Activated B cell treated with CpG ODN at 0.5 μM for 24 hours (primary cell): ENCODE measurements at regions of chr19 and their contacts with region 1.

Region 1: GRCh38 chr19:38559428-38560401 is 58.0 kb downstream of the MAP4K1 start:
- DNase-seq: no peak
- ATAC-seq: peak; percentile 82
- H3K4me3 Mint-ChIP-seq: peak overlapping the region; percentile 75
- H3K27ac Mint-ChIP-seq: peak overlapping the region; percentile 90
- H3K4me1 Mint-ChIP-seq: peaks cover 57% of the 10 kb centered on the region
- H3K27me3 Mint-ChIP-seq: peaks cover 6% of the 10 kb centered on the region
- CTCF ChIP-seq: no peak

Region 2: DNA sequence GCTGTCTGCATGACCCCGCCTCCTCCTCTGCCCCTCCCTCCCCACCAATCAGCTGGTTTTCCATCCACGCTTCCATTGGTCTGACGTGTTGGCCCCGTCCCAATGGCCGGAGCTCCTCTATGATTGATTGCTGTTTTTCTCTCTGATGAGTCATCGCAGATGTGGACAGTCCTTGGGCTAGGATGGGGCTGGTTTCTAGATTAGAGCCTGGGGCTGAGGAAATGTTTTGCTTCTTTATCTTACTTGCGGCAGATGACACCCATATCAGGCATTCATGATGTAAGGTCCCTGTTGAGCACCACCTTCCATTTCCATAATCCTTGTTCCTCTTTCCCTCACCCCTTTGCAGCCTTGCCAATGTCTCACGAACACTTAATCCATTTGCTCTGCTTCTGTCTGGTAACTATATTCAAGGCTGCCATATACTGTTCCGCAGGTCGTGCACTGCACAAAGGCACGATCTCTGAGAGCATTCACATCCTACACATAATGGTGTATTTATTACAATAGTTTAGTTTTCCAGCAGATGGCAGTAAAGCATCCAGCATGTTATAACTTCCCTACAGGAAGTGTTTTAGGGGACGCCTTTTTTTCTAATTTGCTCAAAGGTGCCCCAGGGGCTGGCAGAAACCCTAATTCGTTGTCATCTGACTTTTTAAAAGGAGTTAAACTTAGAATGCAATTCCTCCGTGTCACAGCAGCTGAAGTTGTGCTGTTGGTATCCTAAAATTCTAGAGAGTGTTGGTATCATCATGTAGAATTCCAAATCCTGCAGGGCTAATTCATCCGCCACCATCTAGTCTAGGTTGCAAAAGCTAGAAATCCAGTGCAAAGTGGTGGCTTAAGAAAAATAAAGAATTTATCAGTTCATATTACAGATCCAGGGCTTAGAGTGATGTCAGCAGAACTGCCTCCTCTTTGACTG is 15.4 kb before region 1 on chr19:
- CTCF ChIA-PET with region 1: interaction called, 3 read pairs
- POLR2A ChIA-PET with region 1: interaction called, 17 read pairs
- intact Hi-C with region 1: loop called (anchors 1 kb)
- DNase-seq: no peak
- ATAC-seq: peak; percentile 65
- H3K4me3 Mint-ChIP-seq: peak overlapping the region; percentile 11
- H3K27ac Mint-ChIP-seq: peak overlapping the region; percentile 30
- H3K4me1 Mint-ChIP-seq: peaks cover 33% of the 10 kb centered on the region
- H3K27me3 Mint-ChIP-seq: no peaks in the 10 kb centered on the region
- CTCF ChIP-seq: peak; percentile 41

Region 3: DNA sequence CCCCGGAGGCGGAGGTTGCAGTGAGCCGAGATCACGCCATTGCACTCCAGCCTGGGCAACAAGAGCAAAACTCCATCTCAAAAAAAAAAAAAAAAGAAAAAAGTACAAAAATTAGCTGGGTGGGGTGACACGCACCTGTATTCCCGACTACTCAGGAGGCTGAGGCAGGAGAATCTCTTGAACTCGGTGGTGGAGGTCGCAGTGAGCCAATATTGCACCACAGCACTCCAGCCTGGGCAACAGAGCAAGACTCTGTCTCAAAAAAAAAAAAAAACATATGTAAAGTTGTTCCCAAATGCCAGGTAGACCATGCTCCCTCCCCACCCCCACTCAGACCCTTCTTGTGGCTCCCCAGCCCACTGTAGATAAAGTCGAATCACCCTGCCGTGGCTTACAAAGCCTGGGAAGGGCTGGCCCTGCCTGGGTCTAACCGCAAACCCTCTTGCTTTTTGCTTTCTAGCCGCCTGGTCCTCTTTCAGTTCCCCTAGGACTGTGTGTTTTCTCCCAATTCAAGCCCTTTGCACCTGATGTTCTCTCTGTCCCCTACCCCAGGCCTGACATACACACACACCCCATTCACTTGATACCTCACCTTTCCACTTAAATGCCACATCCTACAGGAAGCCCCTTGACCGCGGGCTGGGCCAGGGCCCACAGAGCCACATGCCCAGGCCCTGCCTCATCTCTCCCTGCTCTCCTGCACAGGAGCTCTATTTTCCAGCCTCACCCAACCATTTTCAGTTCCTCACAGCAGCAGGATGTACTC is 23.7 kb after region 1 on chr19:
- CTCF ChIA-PET with region 1: no interaction called
- POLR2A ChIA-PET with region 1: interaction called, 6 read pairs
- intact Hi-C with region 1: loop called (anchors 1 kb)
- DNase-seq: peak; percentile 25
- ATAC-seq: peak; percentile 81
- H3K4me3 Mint-ChIP-seq: peak overlapping the region; percentile 5
- H3K27ac Mint-ChIP-seq: peak overlapping the region; percentile 37
- H3K4me1 Mint-ChIP-seq: peaks cover 12% of the 10 kb centered on the region
- H3K27me3 Mint-ChIP-seq: no peaks in the 10 kb centered on the region
- CTCF ChIP-seq: no peak

Region 4: GRCh38 chr19:38683393-38684080 is 123.8 kb after region 1 on chr19:
- CTCF ChIA-PET with region 1: no interaction called
- POLR2A ChIA-PET with region 1: interaction called, 4 read pairs
- intact Hi-C with region 1: loop called (anchors 5 kb)
- DNase-seq: peak; percentile 34
- ATAC-seq: peak; percentile 70
- H3K4me3 Mint-ChIP-seq: peak overlapping the region; percentile 46
- H3K27ac Mint-ChIP-seq: peak overlapping the region; percentile 68
- H3K4me1 Mint-ChIP-seq: peaks cover 82% of the 10 kb centered on the region
- H3K27me3 Mint-ChIP-seq: no peaks in the 10 kb centered on the region
- CTCF ChIP-seq: no peak